ENCODE measurements at regions of chr16 and their contacts with region 1.

Region 1: DNA sequence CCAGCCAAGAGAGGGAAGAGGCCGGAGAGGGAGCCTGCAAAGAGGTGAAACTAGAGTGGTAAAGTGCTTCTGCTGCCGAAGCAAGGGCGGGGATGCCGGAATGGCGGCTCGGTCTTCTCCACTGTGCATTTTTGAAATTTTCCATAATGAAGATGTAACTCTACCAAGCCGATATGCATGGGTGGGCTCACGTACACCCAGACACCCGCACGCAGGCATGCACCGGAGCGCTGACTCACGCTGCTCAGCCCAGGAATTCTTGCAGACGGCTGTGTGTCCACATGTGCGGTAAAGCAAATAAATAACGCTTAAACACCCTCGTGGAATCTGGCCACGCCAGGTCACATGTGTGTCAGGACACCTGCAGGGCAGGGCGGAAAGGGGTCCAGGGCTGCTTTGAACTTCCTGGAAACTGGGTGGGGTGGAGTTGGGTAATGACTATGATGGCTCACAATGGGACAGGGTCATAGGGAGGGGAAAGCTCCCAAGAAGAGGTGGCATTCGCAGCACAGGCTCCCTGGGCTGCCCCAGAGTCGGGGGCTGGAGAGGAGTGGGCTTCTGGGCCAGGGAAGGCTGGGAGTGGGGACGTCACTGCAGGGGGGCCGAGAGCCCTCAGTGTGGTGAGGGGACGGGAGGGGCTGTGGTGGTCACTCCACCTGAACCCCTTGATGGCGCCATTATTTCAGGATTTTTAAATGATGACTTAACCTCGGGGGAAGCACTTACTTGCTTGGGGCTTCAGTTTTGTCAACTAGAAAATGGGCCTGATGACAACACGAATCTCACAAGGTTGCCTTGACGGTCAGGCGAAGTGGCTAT is 265.5 kb downstream of the PARN start:
- DNase-seq: no peak
- ATAC-seq: peak; percentile 16 to 67 (median 37)
- H3K4me3 ChIP-seq: no peak overlapping the region
- H3K27ac ChIP-seq: peak overlapping the region; percentile 89
- H3K4me1 ChIP-seq: peaks cover 10% of the 10 kb centered on the region
- H3K27me3 ChIP-seq: no peaks in the 10 kb centered on the region
- CTCF ChIP-seq: no peak

Region 2: GRCh38 chr16:14399378-14400284 is 35.0 kb after region 1 on chr16:
- intact Hi-C with region 1: loop called in 1 of 2 experiments (anchors 5 kb)
- DNase-seq: peak; percentile 79 to 82
- ATAC-seq: peak; percentile 81 to 93 (median 90)
- H3K4me3 ChIP-seq: peak overlapping the region; percentile 49
- H3K27ac ChIP-seq: peak overlapping the region; percentile 95
- H3K4me1 ChIP-seq: peaks cover 10% of the 10 kb centered on the region
- H3K27me3 ChIP-seq: no peaks in the 10 kb centered on the region
- CTCF ChIP-seq: no peak

Region 3: GRCh38 chr16:14427371-14427948 is 62.9 kb after region 1 on chr16:
- intact Hi-C with region 1: no loop called
- DNase-seq: no peak
- ATAC-seq: no peak
- H3K4me3 ChIP-seq: no peak overlapping the region
- H3K27ac ChIP-seq: peak overlapping the region; percentile 46
- H3K4me1 ChIP-seq: peaks cover 14% of the 10 kb centered on the region
- H3K27me3 ChIP-seq: no peaks in the 10 kb centered on the region
- CTCF ChIP-seq: no peak

Measured in psoas muscle (tissue), 8 donors.